ENCODE measurements at regions of chr11 and their contacts with region 1.

Region 1: GRCh38 chr11:64317957-64318693 is at the start of gene PRDX5:
- DNase-seq: peak; percentile 93 to 97 (median 96)
- ATAC-seq: peak; percentile 87
- H3K4me3 ChIP-seq: peak within 1 kb of the TSS; percentile 60
- H3K4me3 Mint-ChIP-seq: peak within 1 kb of the TSS; percentile 85 to 99 (median 96)
- H3K27ac ChIP-seq: peak within 1 kb of the TSS; percentile 92
- H3K27ac Mint-ChIP-seq: peak within 1 kb of the TSS; percentile 97 to 100 (median 100)
- H3K4me1 ChIP-seq: peaks cover 7 to 10% of the 10 kb centered on the region in 2 donors
- H3K4me1 Mint-ChIP-seq: peaks cover 20 to 40% (median 28%) of the 10 kb centered on the region in 7 donors
- H3K27me3 ChIP-seq: no peaks in the 10 kb centered on the region
- H3K27me3 Mint-ChIP-seq: no peaks in the 10 kb centered on the region
- total RNA-seq, gene PRDX5: 41.4 to 99.2 (median 55.2) TPM

Region 2: DNA sequence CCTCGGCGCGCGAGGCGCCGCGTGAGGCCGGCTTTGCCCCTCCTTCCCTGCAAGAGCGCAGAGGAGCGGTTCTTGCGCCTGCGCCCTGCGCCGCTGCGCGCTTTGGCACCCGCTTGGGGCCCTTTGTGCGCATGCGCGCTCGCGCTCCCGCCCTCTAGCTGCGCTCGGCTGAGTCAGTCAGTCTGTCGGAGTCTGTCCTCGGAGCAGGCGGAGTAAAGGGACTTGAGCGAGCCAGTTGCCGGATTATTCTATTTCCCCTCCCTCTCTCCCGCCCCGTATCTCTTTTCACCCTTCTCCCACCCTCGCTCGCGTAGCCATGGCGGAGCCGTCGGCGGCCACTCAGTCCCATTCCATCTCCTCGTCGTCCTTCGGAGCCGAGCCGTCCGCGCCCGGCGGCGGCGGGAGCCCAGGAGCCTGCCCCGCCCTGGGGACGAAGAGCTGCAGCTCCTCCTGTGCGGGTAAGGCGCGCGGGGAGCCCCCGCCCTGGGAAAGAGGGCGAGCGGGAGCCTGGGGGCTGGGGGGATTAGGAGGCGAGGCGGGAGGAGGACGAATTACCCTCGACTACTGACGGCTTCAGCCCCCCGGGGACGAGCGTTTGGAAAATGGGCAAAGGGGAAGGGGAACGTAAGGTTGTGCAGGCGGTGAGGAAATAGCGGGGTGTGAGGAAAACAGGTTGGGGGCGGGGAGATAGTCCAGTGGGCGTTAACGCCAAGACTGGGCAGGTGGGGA is 636.6 kb before region 1 on chr11 and contains the start of gene RTN3:
- CTCF ChIA-PET with region 1: no interaction called
- POLR2A ChIA-PET with region 1: no interaction called
- intact Hi-C with region 1: loop called in 1 of 2 experiments (anchors 5 kb)
- DNase-seq: peak; percentile 97 to 99 (median 98)
- ATAC-seq: peak; percentile 95
- H3K4me3 ChIP-seq: peak within 1 kb of the TSS; percentile 86
- H3K4me3 Mint-ChIP-seq: peak within 1 kb of the TSS; percentile 89 to 97 (median 94)
- H3K27ac ChIP-seq: peak within 1 kb of the TSS; percentile 69
- H3K27ac Mint-ChIP-seq: peak within 1 kb of the TSS; percentile 50 to 97 (median 83)
- H3K4me1 ChIP-seq: peaks cover 6 to 17% of the 10 kb centered on the region in 2 donors
- H3K4me1 Mint-ChIP-seq: peaks cover 20 to 30% (median 27%) of the 10 kb centered on the region in 7 donors
- H3K27me3 ChIP-seq: no peaks in the 10 kb centered on the region
- H3K27me3 Mint-ChIP-seq: peaks cover 0 to 12% (median 0%) of the 10 kb centered on the region in 5 donors
- total RNA-seq, gene RTN3: 20.8 to 65.7 (median 34.4) TPM

Region 3: DNA sequence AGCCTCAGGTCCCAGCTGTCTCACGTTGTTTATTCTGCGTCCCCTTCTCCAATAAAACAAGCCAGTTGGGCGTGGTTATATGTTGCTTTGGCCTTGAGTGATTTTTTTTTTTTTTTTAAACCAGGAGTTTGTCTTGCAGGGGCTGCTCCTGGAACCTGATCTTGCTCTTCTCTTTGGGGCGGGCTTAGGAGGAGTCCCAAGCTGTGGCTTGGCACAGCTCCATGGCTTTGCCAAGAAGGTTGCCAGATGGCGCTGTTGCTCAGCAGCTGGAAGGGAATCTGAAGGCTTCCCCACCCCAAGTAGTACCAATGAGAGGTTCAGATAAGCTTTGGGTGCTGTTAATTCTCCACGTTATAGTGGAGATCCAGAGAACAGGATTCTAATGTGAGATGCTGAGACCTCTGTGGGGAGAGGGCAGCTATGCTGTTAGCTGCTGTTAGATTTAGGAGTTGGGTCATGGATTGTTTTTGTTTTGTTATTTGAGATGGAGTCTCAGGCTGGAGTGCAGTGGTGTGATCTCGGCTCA is 113.6 kb before region 1 on chr11:
- CTCF ChIA-PET with region 1: interaction called, 16 read pairs
- POLR2A ChIA-PET with region 1: interaction called, 41 read pairs
- intact Hi-C with region 1: no loop called
- DNase-seq: peak; percentile 61 to 89 (median 83)
- ATAC-seq: peak; percentile 75
- H3K4me3 ChIP-seq: no peak overlapping the region
- H3K4me3 Mint-ChIP-seq: peak overlapping the region; percentile 27 to 87 (median 68)
- H3K27ac ChIP-seq: no peak overlapping the region
- H3K27ac Mint-ChIP-seq: peak overlapping the region; percentile 43 to 98 (median 86)
- H3K4me1 ChIP-seq: peaks cover 28 to 32% of the 10 kb centered on the region in 2 donors
- H3K4me1 Mint-ChIP-seq: peaks cover 25 to 51% (median 36%) of the 10 kb centered on the region in 7 donors
- H3K27me3 ChIP-seq: no peaks in the 10 kb centered on the region
- H3K27me3 Mint-ChIP-seq: no peaks in the 10 kb centered on the region

Region 4: DNA sequence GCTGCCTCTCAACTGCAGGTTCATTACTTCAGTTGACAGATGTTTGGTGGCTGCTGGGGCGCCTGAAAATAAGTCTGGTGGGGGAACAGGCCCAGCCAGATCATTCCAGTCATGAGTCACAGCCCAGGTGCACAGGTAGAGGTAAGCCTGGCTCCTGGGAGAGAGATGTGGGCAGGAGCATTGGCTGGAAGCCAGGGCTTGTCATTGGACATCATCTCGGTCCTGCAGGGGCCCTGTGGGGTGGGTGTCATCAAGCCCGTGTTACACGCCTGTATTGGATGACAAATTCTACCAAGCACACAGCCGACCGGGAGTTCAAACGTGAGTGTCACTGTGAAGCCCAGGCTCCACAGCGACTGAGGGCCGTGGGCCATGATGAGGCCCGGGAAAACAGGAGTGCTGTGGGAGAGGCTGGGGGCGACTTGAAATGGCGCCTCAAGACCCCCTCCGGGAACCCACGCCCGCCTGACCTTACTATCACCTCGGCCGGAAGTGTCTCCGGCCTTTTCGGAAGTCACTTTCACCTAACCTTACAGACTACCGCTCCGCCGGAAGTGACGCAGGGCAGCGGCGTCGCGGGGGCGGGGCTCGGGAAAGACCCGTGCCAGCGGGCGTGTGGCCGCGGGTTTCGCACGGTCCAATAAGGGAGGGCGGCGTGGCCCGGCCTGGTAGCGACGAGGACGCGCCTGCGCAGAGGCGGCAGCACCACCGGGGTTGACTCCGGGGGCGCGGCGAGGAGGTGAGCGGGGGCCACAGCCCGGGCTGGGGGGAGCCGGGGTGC is 77.5 kb before region 1 on chr11 and contains the start of gene FKBP2:
- CTCF ChIA-PET with region 1: interaction called, 3 read pairs
- POLR2A ChIA-PET with region 1: interaction called, 17 read pairs
- intact Hi-C with region 1: loop called (anchors 1 kb)
- DNase-seq: peak; percentile 97 to 99 (median 98)
- ATAC-seq: peak; percentile 78
- H3K4me3 ChIP-seq: peak within 1 kb of the TSS; percentile 73
- H3K4me3 Mint-ChIP-seq: peak within 1 kb of the TSS; percentile 80 to 95 (median 89)
- H3K27ac ChIP-seq: peak within 1 kb of the TSS; percentile 99
- H3K27ac Mint-ChIP-seq: peak within 1 kb of the TSS; percentile 97 to 100 (median 99)
- H3K4me1 ChIP-seq: peaks cover 24 to 28% of the 10 kb centered on the region in 2 donors
- H3K4me1 Mint-ChIP-seq: peaks cover 9 to 46% (median 31%) of the 10 kb centered on the region in 7 donors
- H3K27me3 ChIP-seq: no peaks in the 10 kb centered on the region
- H3K27me3 Mint-ChIP-seq: no peaks in the 10 kb centered on the region
- total RNA-seq, gene FKBP2: 20.3 to 46.6 (median 33.5) TPM

Region 5: GRCh38 chr11:64259533-64260067 is 58.5 kb before region 1 on chr11:
- CTCF ChIA-PET with region 1: no interaction called
- POLR2A ChIA-PET with region 1: no interaction called
- intact Hi-C with region 1: no loop called
- DNase-seq: no peak
- ATAC-seq: no peak
- H3K4me3 ChIP-seq: no peak overlapping the region
- H3K4me3 Mint-ChIP-seq: no peak overlapping the region
- H3K27ac ChIP-seq: no peak overlapping the region
- H3K27ac Mint-ChIP-seq: no peak overlapping the region
- H3K4me1 ChIP-seq: no peaks in the 10 kb centered on the region
- H3K4me1 Mint-ChIP-seq: peaks cover 0 to 9% (median 0%) of the 10 kb centered on the region in 7 donors
- H3K27me3 ChIP-seq: no peaks in the 10 kb centered on the region
- H3K27me3 Mint-ChIP-seq: no peaks in the 10 kb centered on the region

Region 6: DNA sequence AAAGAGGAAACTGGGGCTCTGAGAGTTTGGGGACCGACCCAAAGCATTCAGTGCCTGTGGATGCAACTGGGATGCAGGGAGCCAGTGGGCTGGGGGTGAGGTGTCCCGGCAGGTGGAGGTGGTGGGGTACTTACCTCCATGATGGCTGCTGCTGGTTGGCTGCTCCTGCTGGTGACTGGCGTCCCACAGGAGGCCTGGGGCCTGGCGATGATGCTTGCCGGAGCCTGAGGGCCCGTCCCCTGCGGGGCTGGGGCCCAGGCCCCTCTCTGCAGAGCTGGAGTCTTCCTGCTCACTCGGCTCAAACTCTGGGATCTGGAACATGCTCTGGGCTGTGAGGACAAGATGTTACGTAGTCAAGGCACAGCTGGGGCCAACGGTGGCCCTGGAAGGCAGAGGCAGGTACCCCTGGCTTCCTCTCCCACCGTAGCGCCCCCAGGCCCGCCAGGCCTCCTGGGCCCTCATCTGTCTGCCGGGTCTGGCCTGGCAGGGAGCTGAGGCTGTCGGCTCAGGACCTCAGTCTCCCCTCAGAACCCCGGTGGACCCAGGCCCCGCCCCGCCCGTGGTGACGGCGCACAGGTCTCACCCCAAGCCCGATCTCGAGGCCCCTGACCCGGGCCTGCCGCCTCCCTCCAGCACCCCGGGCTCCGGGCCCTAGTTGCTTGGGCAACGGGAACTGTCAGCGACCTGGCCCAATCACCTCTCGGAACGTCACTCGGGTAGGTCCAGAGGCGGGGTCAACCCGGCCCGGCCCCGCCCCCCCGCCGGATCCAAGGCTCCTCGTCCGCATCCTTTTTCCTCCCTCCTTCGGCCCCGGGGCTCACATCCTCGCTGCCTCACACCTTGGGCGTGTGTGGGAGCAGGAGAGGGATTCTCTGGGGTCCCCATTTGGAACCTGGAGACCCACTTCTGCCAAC is 33.8 kb before region 1 on chr11 and contains the start of gene BAD:
- CTCF ChIA-PET with region 1: interaction called, 4 read pairs
- POLR2A ChIA-PET with region 1: interaction called, 24 read pairs
- intact Hi-C with region 1: loop called (anchors 1 kb)
- DNase-seq: peak; percentile 77 to 92 (median 87)
- ATAC-seq: peak; percentile 87
- H3K4me3 ChIP-seq: peak within 1 kb of the TSS; percentile 100
- H3K4me3 Mint-ChIP-seq: peak within 1 kb of the TSS; percentile 84 to 93 (median 89)
- H3K27ac ChIP-seq: peak within 1 kb of the TSS; percentile 99
- H3K27ac Mint-ChIP-seq: peak within 1 kb of the TSS; percentile 81 to 98 (median 95)
- H3K4me1 ChIP-seq: peaks cover 11 to 17% of the 10 kb centered on the region in 2 donors
- H3K4me1 Mint-ChIP-seq: peaks cover 8 to 25% (median 18%) of the 10 kb centered on the region in 7 donors
- H3K27me3 ChIP-seq: no peaks in the 10 kb centered on the region
- H3K27me3 Mint-ChIP-seq: no peaks in the 10 kb centered on the region
- total RNA-seq, gene BAD: 17.5 to 41.1 (median 22.7) TPM

Region 7: GRCh38 chr11:64341851-64342791 is 24.0 kb after region 1 on chr11:
- CTCF ChIA-PET with region 1: interaction called, 5 read pairs
- POLR2A ChIA-PET with region 1: interaction called, 38 read pairs
- intact Hi-C with region 1: loop called (anchors 1 kb)
- DNase-seq: peak; percentile 82 to 96 (median 88)
- ATAC-seq: peak; percentile 80
- H3K4me3 ChIP-seq: no peak overlapping the region
- H3K4me3 Mint-ChIP-seq: peak overlapping the region in 9 of 10 donors; percentile 9 to 91 (median 76)
- H3K27ac ChIP-seq: peak overlapping the region; percentile 40
- H3K27ac Mint-ChIP-seq: peak overlapping the region in 3 of 9 donors; percentile 25 to 75 (median 42)
- H3K4me1 ChIP-seq: peaks cover 29 to 30% of the 10 kb centered on the region in 2 donors
- H3K4me1 Mint-ChIP-seq: peaks cover 23 to 49% (median 30%) of the 10 kb centered on the region in 7 donors
- H3K27me3 ChIP-seq: no peaks in the 10 kb centered on the region
- H3K27me3 Mint-ChIP-seq: peaks cover 0 to 2% (median 0%) of the 10 kb centered on the region in 5 donors

Region 8: GRCh38 chr11:64369440-64370211 is 51.5 kb after region 1 on chr11:
- CTCF ChIA-PET with region 1: no interaction called
- POLR2A ChIA-PET with region 1: no interaction called
- intact Hi-C with region 1: no loop called
- DNase-seq: no peak
- ATAC-seq: no peak
- H3K4me3 ChIP-seq: no peak overlapping the region
- H3K4me3 Mint-ChIP-seq: no peak overlapping the region
- H3K27ac ChIP-seq: no peak overlapping the region
- H3K27ac Mint-ChIP-seq: peak overlapping the region in 1 of 9 donors; percentile 36
- H3K4me1 ChIP-seq: no peaks in the 10 kb centered on the region
- H3K4me1 Mint-ChIP-seq: peaks cover 0 to 7% (median 0%) of the 10 kb centered on the region in 7 donors
- H3K27me3 ChIP-seq: no peaks in the 10 kb centered on the region
- H3K27me3 Mint-ChIP-seq: no peaks in the 10 kb centered on the region

Region 9: GRCh38 chr11:64742889-64743590 is 424.9 kb after region 1 on chr11:
- CTCF ChIA-PET with region 1: interaction called, 3 read pairs
- POLR2A ChIA-PET with region 1: interaction called, 10 read pairs
- intact Hi-C with region 1: no loop called
- DNase-seq: peak; percentile 60 to 91 (median 78)
- ATAC-seq: peak; percentile 45
- H3K4me3 ChIP-seq: peak overlapping the region; percentile 98
- H3K4me3 Mint-ChIP-seq: peak overlapping the region in 9 of 10 donors; percentile 89 to 99 (median 97)
- H3K27ac ChIP-seq: peak overlapping the region; percentile 97
- H3K27ac Mint-ChIP-seq: peak overlapping the region in 5 of 9 donors; percentile 88 to 100 (median 98)
- H3K4me1 ChIP-seq: peaks cover 9 to 16% of the 10 kb centered on the region in 2 donors
- H3K4me1 Mint-ChIP-seq: peaks cover 18 to 47% (median 39%) of the 10 kb centered on the region in 7 donors
- H3K27me3 ChIP-seq: no peaks in the 10 kb centered on the region
- H3K27me3 Mint-ChIP-seq: no peaks in the 10 kb centered on the region

Region 10: DNA sequence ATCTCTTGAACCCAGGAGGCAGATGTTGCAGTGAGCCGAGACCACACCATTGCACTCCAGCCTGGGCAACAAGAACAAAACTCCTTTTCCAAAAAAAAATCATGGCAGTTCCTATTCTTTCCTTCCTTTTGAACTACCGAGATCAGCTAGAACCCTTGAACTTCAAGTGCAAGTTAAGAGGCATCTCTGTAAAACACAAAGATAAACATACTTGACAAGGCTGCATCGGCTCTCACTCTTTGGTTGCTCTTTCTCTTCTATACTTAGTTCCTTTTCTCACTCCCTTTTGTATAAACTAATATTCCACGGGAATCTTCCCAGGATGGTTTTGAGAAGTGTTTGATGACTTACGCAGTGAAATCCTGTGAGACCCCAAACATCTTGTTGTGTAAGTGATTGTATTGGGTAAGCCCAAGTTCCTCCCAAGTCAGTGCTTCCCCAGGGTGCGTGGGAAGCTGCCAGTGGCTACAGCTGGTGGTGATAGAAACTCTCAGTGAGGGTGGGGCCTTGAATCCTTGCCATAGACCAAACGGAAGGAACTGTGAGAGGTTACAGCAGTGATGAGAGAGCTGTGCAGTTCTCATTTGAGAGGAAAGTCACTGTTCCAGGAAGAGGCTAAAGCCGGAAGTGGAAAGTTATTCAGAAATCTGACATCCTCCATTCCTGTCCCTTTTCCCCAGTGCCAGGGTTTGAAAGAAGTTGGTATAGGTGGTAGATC is 972.5 kb after region 1 on chr11:
- CTCF ChIA-PET with region 1: no interaction called
- POLR2A ChIA-PET with region 1: no interaction called
- intact Hi-C with region 1: no loop called
- DNase-seq: no peak
- ATAC-seq: peak; percentile 93
- H3K4me3 ChIP-seq: no peak overlapping the region
- H3K4me3 Mint-ChIP-seq: peak overlapping the region in 2 of 10 donors; percentile 10 to 31
- H3K27ac ChIP-seq: no peak overlapping the region
- H3K27ac Mint-ChIP-seq: peak overlapping the region in 3 of 9 donors; percentile 27 to 58 (median 30)
- H3K4me1 ChIP-seq: no peaks in the 10 kb centered on the region
- H3K4me1 Mint-ChIP-seq: peaks cover 0 to 7% (median 0%) of the 10 kb centered on the region in 7 donors
- H3K27me3 ChIP-seq: no peaks in the 10 kb centered on the region
- H3K27me3 Mint-ChIP-seq: no peaks in the 10 kb centered on the region